Right ventricle myocardium inferior (tissue), 1 donor: ENCODE measurements at regions of chr4 and their contacts with region 1.

Region 1: GRCh38 chr4:139919521-139919920 is 234.5 kb downstream of the MAML3 start:
- DNase-seq: no peak
- ATAC-seq: peak; percentile 76

Region 2: GRCh38 chr4:139763672-139764071 is 155.8 kb before region 1 on chr4:
- intact Hi-C with region 1: loop called (anchors 2 kb)
- DNase-seq: no peak
- ATAC-seq: peak; percentile 66

Region 3: DNA sequence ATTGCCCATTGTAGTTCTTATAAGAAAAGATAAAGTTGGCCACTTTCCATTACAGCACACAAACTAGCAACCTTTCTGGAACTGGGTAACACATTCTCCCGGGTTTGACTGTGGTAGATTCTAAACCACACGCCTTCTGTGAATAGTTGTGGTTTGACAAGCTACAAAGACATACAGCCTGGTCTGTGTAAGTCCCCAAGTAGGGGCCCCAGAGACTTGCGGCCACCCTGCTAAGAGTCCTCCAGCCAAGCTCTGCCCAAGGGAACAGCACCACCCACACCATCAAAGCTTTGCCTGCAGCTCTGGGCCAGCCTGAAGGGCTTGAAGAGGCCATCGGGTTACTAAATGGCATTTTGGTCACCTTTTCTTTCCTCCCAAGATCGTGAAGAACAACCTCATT is 31.0 kb after region 1 on chr4:
- intact Hi-C with region 1: no loop called
- DNase-seq: no peak
- ATAC-seq: no peak

Region 4: DNA sequence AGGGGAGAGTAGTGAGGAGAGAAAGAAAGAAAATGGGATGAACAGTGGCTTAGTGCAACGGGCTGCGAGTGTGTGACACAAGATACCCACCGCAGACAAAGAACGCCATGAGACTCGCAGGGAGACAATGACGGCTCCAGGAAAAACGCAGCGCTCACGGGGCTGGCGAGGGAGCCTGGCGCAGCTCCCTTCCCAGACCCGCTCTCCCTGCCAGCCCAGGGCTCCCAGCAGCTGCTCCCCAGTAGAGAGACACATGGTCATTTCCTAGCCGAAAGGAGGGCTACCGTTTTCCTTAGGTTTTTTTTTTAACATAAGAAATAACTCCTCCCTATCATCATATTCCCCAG is 85.0 kb after region 1 on chr4:
- intact Hi-C with region 1: loop called (anchors 5 kb)
- DNase-seq: peak; percentile 66
- ATAC-seq: peak; percentile 76